Adrenal gland (tissue), 19 donors: ENCODE measurements at regions of chr1 and their contacts with region 1.

Region 1: DNA sequence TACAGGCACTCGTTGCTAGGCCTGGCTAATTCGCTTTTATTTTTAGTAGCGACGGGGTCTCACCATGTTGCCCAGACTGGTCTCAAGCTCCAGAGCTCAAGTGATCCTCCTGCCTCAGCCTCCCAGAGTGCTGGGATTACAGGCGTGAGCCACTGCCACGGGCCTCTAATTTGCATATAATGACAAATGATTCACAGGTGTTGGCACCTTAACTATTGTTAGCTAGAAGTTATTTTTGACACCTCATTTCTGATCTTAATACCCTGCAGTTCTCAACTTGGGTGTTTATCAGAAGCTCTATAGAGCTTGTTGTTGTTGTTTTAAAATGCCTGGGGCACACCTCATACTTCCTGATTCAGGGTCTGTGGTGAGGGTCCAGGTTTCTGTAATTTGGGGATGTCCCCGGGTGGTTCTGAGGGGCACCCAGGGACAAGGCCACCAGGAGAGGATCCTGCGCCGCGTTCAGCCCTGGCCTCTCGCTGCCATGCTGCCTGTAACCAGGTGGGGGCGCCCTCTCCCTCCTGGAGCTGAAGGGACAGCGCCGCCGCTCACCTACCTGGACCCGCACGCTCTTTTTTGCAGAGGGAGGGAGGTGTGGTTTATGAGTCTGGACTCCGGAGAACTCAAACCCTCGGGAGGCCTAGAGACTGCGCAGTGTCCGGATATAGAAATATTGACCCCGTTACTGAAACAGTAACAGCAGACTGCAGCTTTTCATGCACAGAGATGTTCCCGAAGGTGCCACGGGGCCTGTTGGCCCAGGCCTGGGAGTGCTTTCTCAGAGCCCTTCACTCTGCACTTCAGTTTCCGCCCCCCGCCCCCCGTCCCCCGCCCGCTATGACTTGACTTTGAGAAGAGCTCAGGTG is 23.0 kb upstream of the NEK2 start:
- DNase-seq: peak; percentile 78 to 93 (median 87)
- H3K4me3 ChIP-seq: peak overlapping the region in 1 of 4 donors; percentile 38
- H3K27ac ChIP-seq: no peak overlapping the region
- H3K4me1 ChIP-seq: peaks cover 0 to 3% of the 10 kb centered on the region in 2 donors
- H3K27me3 ChIP-seq: no peaks in the 10 kb centered on the region
- CTCF ChIP-seq: peak; percentile 94 to 97 (median 96)
- POLR2A ChIP-seq: no peak

Region 2: GRCh38 chr1:211830330-211831142 is 132.1 kb after region 1 on chr1 and contains the start of gene LPGAT1:
- intact Hi-C with region 1: loop called (anchors 2 to 5 kb)
- DNase-seq: peak; percentile 67 to 84 (median 81)
- H3K4me3 ChIP-seq: peak within 1 kb of the TSS; percentile 64 to 97 (median 74)
- H3K27ac ChIP-seq: peak within 1 kb of the TSS; percentile 78 to 98 (median 91)
- H3K4me1 ChIP-seq: peaks cover 12 to 35% of the 10 kb centered on the region in 2 donors
- H3K27me3 ChIP-seq: no peaks in the 10 kb centered on the region
- CTCF ChIP-seq: peak; percentile 25 to 76 (median 64)
- POLR2A ChIP-seq: peak; percentile 48 to 66
- total RNA-seq, gene LPGAT1: 53.2 to 113 (median 86.7) TPM

Region 3: DNA sequence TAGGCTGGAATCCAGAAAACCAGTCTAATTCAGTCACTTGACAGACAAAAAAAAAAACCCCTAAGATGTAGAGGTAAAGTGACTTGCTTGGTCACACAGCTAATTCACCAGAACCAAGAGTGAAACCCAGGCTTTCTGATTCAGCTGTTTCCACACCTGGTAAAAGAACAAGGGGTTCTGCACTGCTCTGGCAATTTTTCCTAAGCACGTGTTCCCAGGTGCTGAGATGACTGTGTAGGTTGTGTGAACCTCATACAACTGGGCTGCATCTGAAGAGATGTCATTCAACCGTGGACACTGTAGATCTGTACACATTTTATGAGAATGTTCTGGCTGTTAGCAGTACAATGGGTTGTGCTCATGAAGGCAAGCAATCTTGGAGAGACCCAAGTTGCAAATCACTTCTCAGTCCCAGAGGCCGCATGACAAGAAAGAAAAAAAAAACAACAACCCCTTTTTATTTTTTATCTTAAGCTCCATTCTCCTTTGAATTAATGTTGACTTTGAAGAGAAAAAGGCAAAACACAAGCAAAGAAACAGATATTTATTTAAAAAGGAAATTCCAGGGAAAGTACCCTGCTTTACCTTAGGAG is 241.6 kb after region 1 on chr1:
- intact Hi-C with region 1: loop called (anchors 10 kb)
- DNase-seq: no peak
- H3K4me3 ChIP-seq: no peak overlapping the region
- H3K27ac ChIP-seq: no peak overlapping the region
- H3K4me1 ChIP-seq: peaks cover 0 to 4% of the 10 kb centered on the region in 2 donors
- H3K27me3 ChIP-seq: no peaks in the 10 kb centered on the region
- CTCF ChIP-seq: no peak
- POLR2A ChIP-seq: no peak